Activated T-helper 2 cell treated with anti-CD3 and anti-CD28 coated beads, Interferon-gamma antibody, Interleukin-2, Interleukin-4, amounts not matched to agents 10 μg/mL and 5 μg/mL and 100 μg/mL, durations not matched to agents 14 hours and 24 hours and 36 hours (primary cell): ENCODE measurements at regions of chr14 and their contacts with region 1.

Region 1: GRCh38 chr14:77023001-77023996 is 5.2 kb downstream of the IRF2BPL start:
- DNase-seq: no peak
- H3K4me3 Mint-ChIP-seq: peak overlapping the region; percentile 43
- H3K27ac Mint-ChIP-seq: peak overlapping the region; percentile 58
- H3K4me1 Mint-ChIP-seq: peaks cover 40% of the 10 kb centered on the region
- H3K27me3 Mint-ChIP-seq: no peaks in the 10 kb centered on the region

Region 2: DNA sequence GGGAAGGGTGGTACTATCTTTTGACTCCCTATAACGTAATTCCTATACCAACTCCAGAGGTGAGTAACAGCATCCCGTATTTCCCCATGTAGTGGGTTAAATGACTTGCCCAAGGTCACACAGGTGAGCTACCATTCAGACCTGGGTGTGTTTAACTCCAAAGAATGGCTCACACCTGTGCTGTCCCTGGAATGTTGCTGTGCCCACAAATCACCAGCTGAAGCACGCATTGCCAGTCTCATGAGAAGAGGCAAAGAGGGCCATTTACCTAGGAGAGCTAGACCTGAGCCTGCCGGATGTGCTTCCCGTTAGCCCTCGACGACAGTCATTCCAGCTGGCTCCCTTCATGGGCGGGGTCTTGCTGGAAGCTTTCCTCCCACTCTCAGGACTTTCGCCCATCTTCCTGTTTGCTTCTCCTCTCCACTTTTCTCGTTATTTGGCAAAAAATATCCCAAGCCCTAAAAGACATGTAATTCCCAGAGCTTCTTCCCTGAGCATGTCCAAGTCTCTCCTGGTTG is 368.7 kb before region 1 on chr14:
- intact Hi-C with region 1: no loop called
- DNase-seq: no peak
- H3K4me3 Mint-ChIP-seq: no peak overlapping the region
- H3K27ac Mint-ChIP-seq: no peak overlapping the region
- H3K4me1 Mint-ChIP-seq: no peaks in the 10 kb centered on the region
- H3K27me3 Mint-ChIP-seq: no peaks in the 10 kb centered on the region

Region 3: DNA sequence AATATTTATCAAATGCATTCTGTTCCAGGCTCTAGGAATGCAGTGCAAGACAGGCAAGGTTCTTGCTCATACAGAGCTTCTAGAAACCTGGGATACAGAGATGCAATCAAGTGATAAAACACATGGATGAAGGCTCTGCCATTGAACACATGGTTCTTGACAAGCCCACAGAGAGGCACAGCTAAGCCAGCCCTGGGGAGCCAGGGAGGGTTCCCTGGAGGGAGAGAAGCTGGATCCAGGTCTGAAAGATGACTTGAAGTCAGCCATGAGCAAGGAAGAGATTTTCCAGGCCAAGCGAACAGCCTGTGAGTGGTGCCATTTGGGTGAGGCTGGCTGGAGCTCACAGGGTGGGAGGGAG is 61.0 kb before region 1 on chr14:
- intact Hi-C with region 1: loop called (anchors 1 kb)
- DNase-seq: no peak
- H3K4me3 Mint-ChIP-seq: peak overlapping the region; percentile 50
- H3K27ac Mint-ChIP-seq: peak overlapping the region; percentile 95
- H3K4me1 Mint-ChIP-seq: peaks cover 80% of the 10 kb centered on the region
- H3K27me3 Mint-ChIP-seq: no peaks in the 10 kb centered on the region

Region 4: GRCh38 chr14:76977793-76978720 is 45.2 kb before region 1 on chr14:
- intact Hi-C with region 1: loop called (anchors 2 kb)
- DNase-seq: peak; percentile 75
- H3K4me3 Mint-ChIP-seq: no peak overlapping the region
- H3K27ac Mint-ChIP-seq: peak overlapping the region; percentile 86
- H3K4me1 Mint-ChIP-seq: peaks cover 31% of the 10 kb centered on the region
- H3K27me3 Mint-ChIP-seq: no peaks in the 10 kb centered on the region

Region 5: GRCh38 chr14:77000340-77001270 is 22.7 kb before region 1 on chr14:
- intact Hi-C with region 1: loop called (anchors 2 kb)
- DNase-seq: no peak
- H3K4me3 Mint-ChIP-seq: no peak overlapping the region
- H3K27ac Mint-ChIP-seq: peak overlapping the region; percentile 68
- H3K4me1 Mint-ChIP-seq: peaks cover 18% of the 10 kb centered on the region
- H3K27me3 Mint-ChIP-seq: no peaks in the 10 kb centered on the region

Region 6: GRCh38 chr14:77040059-77040740 is 16.9 kb after region 1 on chr14:
- intact Hi-C with region 1: loop called (anchors 1 kb)
- DNase-seq: peak; percentile 87
- H3K4me3 Mint-ChIP-seq: peak overlapping the region; percentile 76
- H3K27ac Mint-ChIP-seq: peak overlapping the region; percentile 89
- H3K4me1 Mint-ChIP-seq: peaks cover 81% of the 10 kb centered on the region
- H3K27me3 Mint-ChIP-seq: no peaks in the 10 kb centered on the region